ENCODE measurements at regions of chr18 and their contacts with region 1.

Region 1: GRCh38 chr18:70432804-70433400 is 144.1 kb downstream of the SOCS6 start:
- DNase-seq: no peak
- H3K4me3 Mint-ChIP-seq: no peak overlapping the region
- H3K27ac Mint-ChIP-seq: no peak overlapping the region
- H3K4me1 Mint-ChIP-seq: peaks cover 5% of the 10 kb centered on the region
- H3K27me3 Mint-ChIP-seq: peaks cover 1% of the 10 kb centered on the region

Region 2: DNA sequence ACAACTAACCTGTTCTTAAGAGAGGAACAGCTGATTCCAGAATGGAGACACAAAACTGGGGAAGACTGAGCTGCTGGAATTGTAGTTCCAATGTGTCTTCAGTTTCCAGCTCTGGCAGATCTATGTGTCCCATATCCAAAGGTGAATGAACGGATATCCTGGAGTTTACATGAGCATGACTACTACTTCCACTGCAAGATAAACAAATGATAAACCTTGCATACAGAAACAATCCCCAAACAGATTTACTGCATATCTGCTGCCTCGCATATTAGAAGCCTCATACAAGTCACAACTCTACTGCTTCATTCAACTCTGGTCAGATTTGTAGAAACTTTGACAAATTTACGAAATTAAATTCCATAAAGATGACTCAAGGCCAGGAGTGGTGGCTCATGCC is 242.4 kb before region 1 on chr18:
- CTCF ChIA-PET with region 1: interaction called, 90 read pairs
- POLR2A ChIA-PET with region 1: interaction called, 3 read pairs
- DNase-seq: no peak
- H3K4me3 Mint-ChIP-seq: no peak overlapping the region
- H3K27ac Mint-ChIP-seq: no peak overlapping the region
- H3K4me1 Mint-ChIP-seq: peaks cover 20% of the 10 kb centered on the region
- H3K27me3 Mint-ChIP-seq: no peaks in the 10 kb centered on the region

Region 3: DNA sequence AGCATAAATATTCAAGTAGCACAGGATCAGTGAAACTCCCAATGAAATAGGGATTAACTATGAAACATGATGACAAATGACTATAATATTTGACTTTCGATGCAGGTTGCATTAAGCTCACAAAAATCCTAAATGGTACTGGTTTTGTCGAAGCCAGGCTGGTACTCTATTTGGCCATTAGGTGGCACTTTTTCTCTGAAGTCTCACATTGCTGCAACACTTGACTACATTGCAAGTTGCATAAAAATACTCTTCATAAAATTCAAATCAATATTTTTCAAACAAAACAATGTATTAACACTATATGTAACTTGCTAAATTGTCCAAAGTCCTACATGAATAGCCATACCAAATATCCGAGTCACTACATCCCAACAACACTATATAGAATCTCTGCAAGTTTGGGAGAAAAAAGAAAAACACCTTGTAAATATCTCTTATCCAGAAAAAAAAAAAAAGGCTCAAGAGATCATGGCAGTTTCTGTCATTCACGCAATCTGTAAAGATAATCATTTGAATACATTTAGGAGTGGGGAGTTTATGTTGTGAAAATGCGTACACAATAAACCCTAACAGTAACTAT is 237.0 kb before region 1 on chr18:
- CTCF ChIA-PET with region 1: interaction called, 90 read pairs
- POLR2A ChIA-PET with region 1: interaction called, 3 read pairs
- DNase-seq: no peak
- H3K4me3 Mint-ChIP-seq: no peak overlapping the region
- H3K27ac Mint-ChIP-seq: no peak overlapping the region
- H3K4me1 Mint-ChIP-seq: peaks cover 50% of the 10 kb centered on the region
- H3K27me3 Mint-ChIP-seq: no peaks in the 10 kb centered on the region

Region 4: GRCh38 chr18:70400476-70400875 is 32.4 kb before region 1 on chr18:
- CTCF ChIA-PET with region 1: no interaction called
- POLR2A ChIA-PET with region 1: no interaction called
- DNase-seq: no peak
- H3K4me3 Mint-ChIP-seq: no peak overlapping the region
- H3K27ac Mint-ChIP-seq: no peak overlapping the region
- H3K4me1 Mint-ChIP-seq: no peaks in the 10 kb centered on the region
- H3K27me3 Mint-ChIP-seq: peaks cover 2% of the 10 kb centered on the region

Region 5: GRCh38 chr18:70454704-70455322 is 21.9 kb after region 1 on chr18:
- CTCF ChIA-PET with region 1: interaction called, 14 read pairs
- POLR2A ChIA-PET with region 1: no interaction called
- DNase-seq: peak; percentile 25
- H3K4me3 Mint-ChIP-seq: no peak overlapping the region
- H3K27ac Mint-ChIP-seq: no peak overlapping the region
- H3K4me1 Mint-ChIP-seq: no peaks in the 10 kb centered on the region
- H3K27me3 Mint-ChIP-seq: peaks cover 6% of the 10 kb centered on the region